Ovary (tissue), 10 donors: ENCODE measurements at regions of chr16 and their contacts with region 1.

Region 1: DNA sequence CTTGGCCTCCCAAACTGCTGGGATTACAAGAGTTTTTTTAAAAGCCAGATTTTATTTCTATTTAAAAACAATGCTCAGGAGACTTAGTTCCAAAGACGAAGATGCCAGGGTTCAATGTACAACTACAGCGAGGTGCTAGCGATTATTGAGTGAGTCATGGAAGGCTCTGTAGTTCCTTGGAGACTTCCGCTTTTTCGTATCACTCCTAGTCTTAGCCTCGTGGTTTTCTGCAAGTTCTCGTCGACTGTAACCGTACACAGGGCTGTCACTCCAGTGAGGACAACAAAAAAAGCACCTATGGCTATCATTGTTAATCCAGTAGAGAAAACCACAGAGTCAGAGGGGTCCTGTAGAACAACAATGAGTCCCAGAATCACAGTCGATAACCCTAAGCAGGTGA is 22.7 kb upstream of the ZC3H7A start:
- DNase-seq: no peak
- H3K4me3 ChIP-seq: no peak overlapping the region
- H3K27ac ChIP-seq: no peak overlapping the region
- H3K4me1 ChIP-seq: no peaks in the 10 kb centered on the region
- H3K27me3 ChIP-seq: no peaks in the 10 kb centered on the region
- CTCF ChIP-seq: no peak
- EP300 ChIP-seq: no peak
- POLR2A ChIP-seq: no peak

Region 2: GRCh38 chr16:11535471-11535870 is 284.3 kb before region 1 on chr16:
- intact Hi-C with region 1: loop called in 1 of 4 experiments (anchors 10 kb)
- DNase-seq: no peak
- H3K4me3 ChIP-seq: no peak overlapping the region
- H3K27ac ChIP-seq: no peak overlapping the region
- H3K4me1 ChIP-seq: no peaks in the 10 kb centered on the region
- H3K27me3 ChIP-seq: no peaks in the 10 kb centered on the region
- CTCF ChIP-seq: no peak
- EP300 ChIP-seq: no peak
- POLR2A ChIP-seq: no peak